Caco-2 (cell line): ENCODE measurements at regions of chr22 and their contacts with region 1.

Region 1: DNA sequence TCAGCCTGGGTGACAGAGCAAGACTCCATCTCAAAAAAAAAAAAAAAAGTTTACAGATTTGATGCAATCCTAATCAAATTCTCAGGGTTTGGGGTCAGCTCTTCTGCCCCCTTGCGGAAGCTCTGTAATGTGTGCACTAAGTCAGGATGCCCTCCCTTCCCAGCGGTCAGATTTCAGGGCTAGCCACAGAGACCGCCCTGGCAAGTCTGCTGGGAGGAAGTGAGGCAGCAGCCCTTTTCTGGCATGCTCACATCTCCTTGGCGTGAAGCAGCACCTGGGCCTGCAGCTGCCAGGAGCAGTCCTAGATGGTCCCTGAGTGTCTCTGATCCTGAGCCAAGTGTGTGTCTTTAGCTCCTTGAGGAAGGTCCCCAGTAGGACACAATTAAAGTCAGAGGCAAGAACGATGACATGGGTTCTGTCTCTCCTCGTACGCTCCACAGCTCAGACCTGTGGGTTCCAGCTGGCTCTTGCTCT is 10.9 kb upstream of the APOBEC3C start:
- DNase-seq: peak; percentile 70 to 71
- H3K4me3 ChIP-seq: no peak overlapping the region
- H3K4me3 Mint-ChIP-seq: no peak overlapping the region
- H3K27ac Mint-ChIP-seq: no peak overlapping the region
- H3K4me1 ChIP-seq: peaks cover 5% of the 10 kb centered on the region; the same call in 1 of the 2 replicates
- H3K4me1 Mint-ChIP-seq: no peaks in the 10 kb centered on the region
- H3K27me3 ChIP-seq: no peaks in the 10 kb centered on the region; the same call in 1 of the 2 replicates
- H3K27me3 Mint-ChIP-seq: no peaks in the 10 kb centered on the region
- CTCF ChIP-seq: peak in 1 of 2 experiments; percentile 71

Region 2: DNA sequence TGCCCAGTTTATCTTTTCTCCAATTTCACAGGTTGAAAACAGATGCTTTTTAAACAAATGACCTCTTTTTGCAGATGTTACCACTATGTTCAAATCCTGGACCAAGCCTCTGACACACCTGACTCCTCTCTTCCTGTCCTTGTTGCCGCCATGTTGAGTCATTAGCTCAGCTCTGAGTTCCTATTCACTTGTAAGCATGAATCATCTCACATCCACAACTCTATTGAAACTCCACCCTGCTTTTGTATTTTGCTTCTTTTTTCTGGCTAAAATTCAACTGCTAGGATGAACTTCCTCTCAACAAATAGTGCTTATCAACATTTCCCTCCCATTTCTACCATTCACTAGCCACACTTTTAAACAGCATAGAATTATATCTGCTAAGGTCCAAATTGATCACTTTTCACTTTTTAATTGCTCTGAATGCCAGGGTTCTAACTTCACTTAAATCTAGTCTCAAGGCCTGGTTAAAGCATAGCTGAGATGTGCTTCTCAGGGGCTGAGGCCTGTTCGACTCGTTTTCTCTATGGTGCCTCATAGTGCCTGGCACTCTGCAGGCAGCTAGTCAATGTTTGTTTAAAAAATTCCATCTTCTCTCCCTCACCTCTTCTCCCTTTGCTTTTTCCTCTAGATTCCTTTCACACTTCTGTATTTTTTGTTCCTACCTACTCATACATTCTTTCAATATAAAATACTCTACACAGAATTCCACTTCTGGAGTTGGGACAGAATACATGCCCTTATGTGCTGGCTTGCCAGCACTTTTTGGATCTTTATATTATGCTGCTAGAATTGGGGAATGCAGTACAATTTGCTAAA is 306.4 kb before region 1 on chr22:
- CTCF ChIA-PET with region 1: no interaction called
- POLR2A ChIA-PET with region 1: no interaction called
- intact Hi-C with region 1: no loop called
- DNase-seq: peak; percentile 67 to 78
- H3K4me3 ChIP-seq: peak overlapping the region; percentile 3; the same call in 1 of the 2 replicates
- H3K4me3 Mint-ChIP-seq: peak overlapping the region; percentile 87
- H3K27ac Mint-ChIP-seq: peak overlapping the region; percentile 100
- H3K4me1 ChIP-seq: peaks cover 59% of the 10 kb centered on the region
- H3K4me1 Mint-ChIP-seq: peaks cover 37% of the 10 kb centered on the region
- H3K27me3 ChIP-seq: no peaks in the 10 kb centered on the region
- H3K27me3 Mint-ChIP-seq: no peaks in the 10 kb centered on the region
- CTCF ChIP-seq: no peak

Region 3: DNA sequence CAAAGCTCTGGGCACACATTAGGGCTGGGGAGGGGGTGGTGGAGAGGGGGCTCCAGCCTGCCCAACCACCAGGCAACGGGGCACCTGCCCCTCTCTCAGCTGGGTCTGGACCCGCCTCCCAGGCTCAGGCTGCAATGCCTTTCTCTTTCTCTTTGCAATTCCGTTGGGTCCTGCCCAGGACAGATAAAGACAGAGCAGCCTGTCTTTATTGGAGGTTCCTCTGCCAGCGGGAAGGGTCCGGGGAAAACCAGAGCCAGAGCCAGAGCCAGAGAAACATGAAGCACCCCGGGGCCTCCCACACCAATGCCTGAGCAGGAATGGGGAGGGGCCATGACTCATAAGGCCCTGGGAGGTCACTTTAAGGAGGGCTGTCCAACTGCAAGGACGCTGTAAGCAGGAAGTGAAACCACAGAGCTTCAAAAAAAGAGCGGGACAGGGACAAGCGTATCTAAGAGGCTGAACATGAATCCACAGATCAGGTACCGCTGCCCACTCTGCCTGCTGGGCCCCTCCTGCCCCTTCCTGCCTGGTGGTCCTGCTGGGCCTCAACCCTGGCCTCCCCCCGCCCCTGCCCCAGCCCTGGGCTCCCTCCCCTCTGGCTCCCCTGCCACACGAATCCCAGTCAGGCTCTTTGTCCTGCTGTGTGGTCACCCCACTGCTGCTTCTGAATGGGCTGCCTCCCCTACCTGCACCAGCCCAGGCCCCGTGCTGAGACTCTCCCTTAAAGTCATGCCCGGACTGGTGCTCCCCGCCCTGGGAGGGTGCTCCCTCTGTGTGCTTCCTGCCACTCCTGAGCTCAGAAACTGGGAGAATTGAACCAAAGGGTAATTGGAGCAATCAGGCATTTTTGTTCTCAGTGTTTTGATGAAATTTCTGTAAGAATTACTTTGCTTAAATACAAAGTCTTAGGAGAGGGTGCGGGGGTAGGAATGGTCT is 20.9 kb before region 1 on chr22 and contains the start of gene APOBEC3B:
- CTCF ChIA-PET with region 1: interaction called, 21 read pairs
- POLR2A ChIA-PET with region 1: no interaction called
- intact Hi-C with region 1: loop called (anchors 1 kb)
- DNase-seq: peak; percentile 91 to 94
- H3K4me3 ChIP-seq: peak within 1 kb of the TSS; percentile 44
- H3K4me3 Mint-ChIP-seq: peak within 1 kb of the TSS; percentile 80
- H3K27ac Mint-ChIP-seq: peak within 1 kb of the TSS; percentile 91
- H3K4me1 ChIP-seq: peaks cover 19% of the 10 kb centered on the region
- H3K4me1 Mint-ChIP-seq: peaks cover 19% of the 10 kb centered on the region
- H3K27me3 ChIP-seq: no peaks in the 10 kb centered on the region
- H3K27me3 Mint-ChIP-seq: no peaks in the 10 kb centered on the region
- CTCF ChIP-seq: no peak
- total RNA-seq, gene APOBEC3B: 55.8 and 60.9 TPM in 2 replicates

Region 4: DNA sequence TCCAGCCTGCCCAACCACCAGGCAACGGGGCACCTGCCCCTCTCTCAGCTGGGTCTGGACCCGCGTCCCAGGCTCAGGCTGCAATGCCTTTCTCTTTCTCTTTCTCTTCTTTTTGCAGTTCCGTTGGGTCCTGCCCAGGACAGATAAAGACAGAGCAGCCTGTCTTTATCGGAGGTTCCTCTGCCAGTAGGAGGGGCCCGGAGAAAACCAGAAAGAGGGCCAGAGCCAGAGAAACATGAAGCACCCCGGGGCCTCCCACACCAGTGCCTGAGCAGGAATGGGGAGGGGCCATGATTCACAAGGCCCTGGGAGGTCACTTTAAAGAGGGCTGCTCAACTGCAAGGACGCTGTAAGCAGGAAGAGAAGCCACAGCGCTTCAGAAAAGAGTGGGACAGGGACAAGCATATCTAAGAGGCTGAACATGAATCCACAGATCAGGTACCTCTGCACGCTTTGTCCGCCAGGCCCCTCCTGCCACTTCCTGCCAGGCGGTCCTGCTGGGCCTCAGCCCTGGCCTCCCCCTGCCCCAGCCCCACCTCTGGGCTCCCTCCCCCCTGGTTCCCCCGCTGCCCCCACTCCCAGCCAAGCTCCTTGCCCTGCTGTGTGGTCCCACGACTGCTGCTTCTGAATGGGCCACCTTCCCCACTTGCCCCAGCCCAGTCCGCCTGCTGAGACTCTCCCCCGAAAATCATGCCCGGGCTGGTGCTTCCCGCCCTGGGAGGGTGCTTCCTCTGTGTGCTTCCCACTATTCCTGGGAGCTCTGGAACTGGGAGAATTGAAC is 10.9 kb after region 1 on chr22 and contains the start of gene APOBEC3C:
- CTCF ChIA-PET with region 1: interaction called, 3 read pairs
- POLR2A ChIA-PET with region 1: interaction called, 11 read pairs
- intact Hi-C with region 1: no loop called
- DNase-seq: peak; percentile 81 to 87
- H3K4me3 ChIP-seq: peak within 1 kb of the TSS; percentile 41
- H3K4me3 Mint-ChIP-seq: peak within 1 kb of the TSS; percentile 81
- H3K27ac Mint-ChIP-seq: peak within 1 kb of the TSS; percentile 85
- H3K4me1 ChIP-seq: peaks cover 21% of the 10 kb centered on the region
- H3K4me1 Mint-ChIP-seq: peaks cover 30% of the 10 kb centered on the region
- H3K27me3 ChIP-seq: no peaks in the 10 kb centered on the region
- H3K27me3 Mint-ChIP-seq: no peaks in the 10 kb centered on the region
- CTCF ChIP-seq: no peak
- total RNA-seq, gene APOBEC3C: 24.2 and 25.1 TPM in 2 replicates

Region 5: GRCh38 chr22:39122786-39123475 is 119.7 kb after region 1 on chr22:
- CTCF ChIA-PET with region 1: no interaction called
- POLR2A ChIA-PET with region 1: no interaction called
- intact Hi-C with region 1: loop called (anchors 1 kb)
- DNase-seq: no peak
- H3K4me3 ChIP-seq: no peak overlapping the region
- H3K4me3 Mint-ChIP-seq: no peak overlapping the region
- H3K27ac Mint-ChIP-seq: no peak overlapping the region
- H3K4me1 ChIP-seq: no peaks in the 10 kb centered on the region
- H3K4me1 Mint-ChIP-seq: peaks cover 2% of the 10 kb centered on the region
- H3K27me3 ChIP-seq: no peaks in the 10 kb centered on the region
- H3K27me3 Mint-ChIP-seq: no peaks in the 10 kb centered on the region
- CTCF ChIP-seq: no peak